CD8-positive, alpha-beta T cell (primary cell): ENCODE measurements at regions of chr17 and their contacts with region 1.

Region 1: DNA sequence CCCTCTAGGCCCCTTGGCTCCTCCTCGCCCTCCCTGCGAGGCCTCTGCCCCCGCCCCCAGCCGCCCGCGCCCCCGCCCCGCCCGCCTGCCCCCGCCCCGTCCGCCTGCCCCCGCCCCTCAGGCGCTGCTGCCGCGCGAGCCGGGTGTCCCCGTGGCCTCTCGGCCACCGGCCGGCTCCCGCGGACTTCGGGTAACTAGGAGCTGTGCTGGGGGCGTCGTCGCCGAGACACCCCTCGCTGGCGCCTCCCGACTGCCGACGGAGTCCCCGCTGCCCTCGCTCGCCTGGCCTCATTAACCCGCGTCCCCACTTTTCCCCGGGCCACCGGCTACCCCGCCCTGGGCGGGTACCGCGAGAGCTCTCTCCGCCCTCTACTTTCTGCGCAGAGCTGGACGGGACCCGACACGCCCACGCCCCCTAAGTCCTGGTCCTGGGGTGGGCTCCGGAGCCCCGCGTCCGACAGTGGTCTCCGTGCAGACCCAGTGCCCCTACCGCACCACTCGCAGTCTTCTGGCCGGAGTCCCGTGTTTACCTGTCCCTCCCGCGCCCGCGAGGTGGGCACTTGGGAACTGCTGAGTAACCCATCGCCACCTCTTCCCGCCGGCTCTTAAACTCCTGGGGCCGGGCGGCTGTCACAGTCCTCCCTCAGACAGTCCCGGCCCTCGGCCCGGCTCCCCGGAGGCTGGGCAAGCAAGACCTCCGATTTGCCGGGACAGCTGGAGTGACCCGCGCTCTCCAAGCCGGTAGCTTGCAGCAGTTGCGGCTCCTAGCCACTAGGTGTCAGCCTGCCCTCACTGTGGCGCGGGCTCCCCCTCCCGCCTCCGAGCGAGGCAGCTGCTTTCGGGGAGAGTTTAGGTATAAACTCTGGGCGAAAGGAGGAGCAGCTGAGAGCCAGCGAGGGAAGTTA is at the start of gene TLCD1:
- DNase-seq: peak; percentile 82 to 94 (median 91)
- ATAC-seq: peak; percentile 43
- H3K4me3 ChIP-seq: peak within 1 kb of the TSS; percentile 88 to 92
- H3K4me3 Mint-ChIP-seq: peak within 1 kb of the TSS; percentile 97
- H3K27ac ChIP-seq: peak within 1 kb of the TSS; percentile 43 to 98
- H3K27ac Mint-ChIP-seq: peak within 1 kb of the TSS; percentile 99
- H3K4me1 ChIP-seq: peaks cover 38% of the 10 kb centered on the region
- H3K4me1 Mint-ChIP-seq: peaks cover 59% of the 10 kb centered on the region
- H3K27me3 ChIP-seq: no peaks in the 10 kb centered on the region
- H3K27me3 Mint-ChIP-seq: no peaks in the 10 kb centered on the region
- CTCF ChIP-seq: peak; percentile 99
- total RNA-seq, gene TLCD1: 0.73 to 1.1 TPM

Region 2: DNA sequence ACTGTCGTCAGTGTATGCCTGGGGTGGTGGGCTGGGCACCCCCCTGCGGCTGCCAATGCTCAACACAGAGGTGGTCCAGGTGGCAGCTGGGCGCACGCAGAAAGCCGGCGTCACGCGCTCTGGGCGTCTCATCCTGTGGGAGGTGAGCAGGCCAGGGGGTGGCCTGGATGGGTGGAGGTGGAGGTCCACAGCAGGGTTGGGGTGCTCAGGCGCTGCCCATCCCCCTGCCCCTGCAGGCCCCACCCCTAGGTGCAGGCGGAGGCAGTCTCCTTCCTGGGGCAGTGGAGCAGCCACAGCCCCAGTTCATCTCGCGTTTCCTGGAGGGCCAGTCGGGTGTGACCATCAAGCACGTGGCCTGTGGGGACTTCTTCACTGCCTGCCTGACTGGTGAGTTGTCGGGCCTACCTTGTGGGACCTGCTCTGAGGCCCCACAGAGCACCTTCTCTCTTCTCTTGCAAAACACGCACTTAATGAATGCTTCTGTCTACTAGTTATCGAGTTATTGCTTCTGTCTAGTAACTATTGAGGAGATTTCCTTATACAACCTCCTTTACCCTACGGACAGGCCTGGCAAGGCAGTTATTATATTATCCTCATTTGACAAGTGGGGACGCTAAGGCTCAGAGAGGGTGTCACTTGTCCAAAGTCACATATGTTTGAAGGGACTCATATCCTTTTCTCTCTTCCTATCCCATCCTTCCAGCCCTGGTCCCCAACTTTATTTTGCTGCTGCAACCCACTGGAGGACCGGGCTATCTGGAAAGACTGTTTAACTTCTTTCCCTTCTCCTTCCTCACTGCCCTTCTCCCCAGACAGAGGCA is 11.6 kb after region 1 on chr17:
- CTCF ChIA-PET with region 1: interaction called, 532 read pairs
- POLR2A ChIA-PET with region 1: interaction called, 187 read pairs
- intact Hi-C with region 1: loop called (anchors 1 kb)
- DNase-seq: peak in 1 of 9 experiments; percentile 38
- ATAC-seq: no peak
- H3K4me3 ChIP-seq: no peak overlapping the region
- H3K4me3 Mint-ChIP-seq: no peak overlapping the region
- H3K27ac ChIP-seq: no peak overlapping the region
- H3K27ac Mint-ChIP-seq: peak overlapping the region; percentile 86
- H3K4me1 ChIP-seq: peaks cover 24% of the 10 kb centered on the region
- H3K4me1 Mint-ChIP-seq: peaks cover 17% of the 10 kb centered on the region
- H3K27me3 ChIP-seq: no peaks in the 10 kb centered on the region
- H3K27me3 Mint-ChIP-seq: no peaks in the 10 kb centered on the region
- CTCF ChIP-seq: no peak

Region 3: DNA sequence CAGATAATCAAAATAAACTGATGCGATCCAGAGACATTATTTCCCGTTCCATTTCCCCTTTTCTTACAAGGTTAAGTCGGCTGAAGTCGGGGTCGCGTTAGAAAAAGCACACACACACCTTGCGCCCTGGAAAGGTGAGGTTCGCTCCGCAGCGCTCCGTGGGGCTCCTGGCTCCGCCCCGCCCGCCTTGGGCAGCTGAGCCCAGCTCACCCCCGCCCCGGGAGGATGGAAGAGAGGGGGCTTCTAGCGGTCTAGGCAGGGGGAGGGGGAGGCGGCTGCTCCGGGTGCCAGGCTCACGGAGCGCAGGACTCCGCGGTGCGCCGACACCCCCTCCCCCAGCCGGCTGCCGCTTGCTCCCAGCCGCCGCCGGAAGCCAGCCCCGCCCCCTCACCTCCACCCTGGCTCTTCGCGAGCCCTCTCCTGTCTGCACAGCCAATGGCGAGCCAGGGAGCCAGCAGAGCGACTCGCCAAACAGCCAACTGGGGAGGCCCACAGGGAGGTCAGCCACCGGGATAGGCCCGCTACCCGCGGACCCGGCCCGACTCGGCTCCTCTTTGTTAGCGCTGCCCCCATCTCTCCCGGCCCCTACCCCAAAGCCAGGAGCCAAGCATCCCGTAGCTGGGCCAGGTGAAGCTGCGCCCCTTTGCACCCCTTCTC is 85.7 kb after region 1 on chr17:
- CTCF ChIA-PET with region 1: interaction called, 4 read pairs
- POLR2A ChIA-PET with region 1: interaction called, 3 read pairs
- intact Hi-C with region 1: loop called (anchors 2 to 5 kb)
- DNase-seq: peak; percentile 90 to 98 (median 96)
- ATAC-seq: peak; percentile 96
- H3K4me3 ChIP-seq: peak overlapping the region; percentile 67 to 99
- H3K4me3 Mint-ChIP-seq: peak overlapping the region; percentile 94
- H3K27ac ChIP-seq: peak overlapping the region; percentile 93 to 96
- H3K27ac Mint-ChIP-seq: peak overlapping the region; percentile 93
- H3K4me1 ChIP-seq: peaks cover 18% of the 10 kb centered on the region
- H3K4me1 Mint-ChIP-seq: peaks cover 35% of the 10 kb centered on the region
- H3K27me3 ChIP-seq: no peaks in the 10 kb centered on the region
- H3K27me3 Mint-ChIP-seq: no peaks in the 10 kb centered on the region
- CTCF ChIP-seq: no peak

Region 4: GRCh38 chr17:28864991-28865849 is 138.7 kb after region 1 on chr17:
- CTCF ChIA-PET with region 1: no interaction called
- POLR2A ChIA-PET with region 1: no interaction called
- intact Hi-C with region 1: no loop called
- DNase-seq: no peak
- ATAC-seq: no peak
- H3K4me3 ChIP-seq: no peak overlapping the region
- H3K4me3 Mint-ChIP-seq: no peak overlapping the region
- H3K27ac ChIP-seq: no peak overlapping the region
- H3K27ac Mint-ChIP-seq: no peak overlapping the region
- H3K4me1 ChIP-seq: no peaks in the 10 kb centered on the region
- H3K4me1 Mint-ChIP-seq: no peaks in the 10 kb centered on the region
- H3K27me3 ChIP-seq: no peaks in the 10 kb centered on the region
- H3K27me3 Mint-ChIP-seq: no peaks in the 10 kb centered on the region
- CTCF ChIP-seq: no peak

Region 5: DNA sequence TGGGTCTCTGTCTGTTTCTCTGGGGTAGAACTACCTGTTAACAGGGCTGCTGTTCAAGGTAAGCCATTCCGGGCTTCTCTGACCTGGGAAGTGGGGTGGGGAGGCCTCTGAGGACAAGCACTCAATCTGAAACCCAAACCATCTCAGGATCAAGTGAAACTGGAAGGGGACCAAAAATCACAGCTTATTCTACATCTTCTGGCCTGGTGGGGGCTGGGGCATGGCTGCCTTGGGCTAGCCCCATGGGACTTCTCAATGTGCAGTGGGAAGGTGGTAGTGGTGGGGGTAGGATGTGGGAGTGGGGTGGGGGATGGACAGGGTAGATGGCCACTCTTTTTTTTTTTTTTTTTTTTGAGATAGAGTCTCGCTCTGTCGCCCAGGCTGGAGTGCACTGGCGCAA is 165.5 kb after region 1 on chr17:
- CTCF ChIA-PET with region 1: interaction called, 18 read pairs
- POLR2A ChIA-PET with region 1: interaction called, 6 read pairs
- intact Hi-C with region 1: no loop called
- DNase-seq: no peak
- ATAC-seq: no peak
- H3K4me3 ChIP-seq: no peak overlapping the region
- H3K4me3 Mint-ChIP-seq: peak overlapping the region; percentile 54
- H3K27ac ChIP-seq: peak overlapping the region in 1 of 2 experiments; percentile 38
- H3K27ac Mint-ChIP-seq: peak overlapping the region; percentile 85
- H3K4me1 ChIP-seq: peaks cover 43% of the 10 kb centered on the region
- H3K4me1 Mint-ChIP-seq: peaks cover 60% of the 10 kb centered on the region
- H3K27me3 ChIP-seq: no peaks in the 10 kb centered on the region
- H3K27me3 Mint-ChIP-seq: no peaks in the 10 kb centered on the region
- CTCF ChIP-seq: no peak

Region 6: DNA sequence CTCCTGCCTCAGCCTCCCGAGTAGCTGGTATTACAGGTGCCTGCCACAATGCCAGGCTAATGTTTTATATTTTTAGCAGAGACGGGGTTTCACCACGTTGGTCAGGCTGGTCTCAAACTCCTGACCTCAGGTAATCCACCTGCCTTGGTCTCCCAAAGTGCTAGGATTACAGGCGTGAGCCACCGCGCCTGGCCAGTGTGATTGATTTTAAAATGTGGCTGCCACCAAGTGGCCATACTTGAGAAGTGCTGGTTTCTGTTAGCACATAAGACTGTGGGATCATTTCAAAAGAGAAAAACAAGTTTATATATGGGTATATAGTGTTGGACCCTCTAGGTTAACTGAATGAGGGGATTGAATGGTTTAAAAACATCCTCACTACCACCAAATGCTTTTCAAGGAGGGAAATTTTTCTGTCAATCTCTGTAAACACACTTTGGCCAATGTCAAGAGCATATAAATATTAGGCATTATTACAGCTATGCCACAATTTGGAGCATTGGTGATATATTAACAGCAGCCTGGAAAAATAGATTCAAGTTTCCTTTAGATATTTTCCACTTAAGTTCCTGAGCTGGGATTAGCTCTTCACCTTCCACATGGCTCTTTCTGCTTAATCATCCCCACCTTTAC is 189.9 kb after region 1 on chr17:
- CTCF ChIA-PET with region 1: interaction called, 26 read pairs
- POLR2A ChIA-PET with region 1: no interaction called
- intact Hi-C with region 1: loop called in 1 of 2 experiments (anchors 1 kb)
- DNase-seq: peak in 6 of 9 experiments; percentile 44 to 67 (median 54)
- ATAC-seq: peak; percentile 75
- H3K4me3 ChIP-seq: no peak overlapping the region
- H3K4me3 Mint-ChIP-seq: no peak overlapping the region
- H3K27ac ChIP-seq: no peak overlapping the region
- H3K27ac Mint-ChIP-seq: peak overlapping the region; percentile 65
- H3K4me1 ChIP-seq: no peaks in the 10 kb centered on the region
- H3K4me1 Mint-ChIP-seq: peaks cover 1% of the 10 kb centered on the region
- H3K27me3 ChIP-seq: no peaks in the 10 kb centered on the region
- H3K27me3 Mint-ChIP-seq: no peaks in the 10 kb centered on the region
- CTCF ChIP-seq: peak; percentile 74

Region 7: DNA sequence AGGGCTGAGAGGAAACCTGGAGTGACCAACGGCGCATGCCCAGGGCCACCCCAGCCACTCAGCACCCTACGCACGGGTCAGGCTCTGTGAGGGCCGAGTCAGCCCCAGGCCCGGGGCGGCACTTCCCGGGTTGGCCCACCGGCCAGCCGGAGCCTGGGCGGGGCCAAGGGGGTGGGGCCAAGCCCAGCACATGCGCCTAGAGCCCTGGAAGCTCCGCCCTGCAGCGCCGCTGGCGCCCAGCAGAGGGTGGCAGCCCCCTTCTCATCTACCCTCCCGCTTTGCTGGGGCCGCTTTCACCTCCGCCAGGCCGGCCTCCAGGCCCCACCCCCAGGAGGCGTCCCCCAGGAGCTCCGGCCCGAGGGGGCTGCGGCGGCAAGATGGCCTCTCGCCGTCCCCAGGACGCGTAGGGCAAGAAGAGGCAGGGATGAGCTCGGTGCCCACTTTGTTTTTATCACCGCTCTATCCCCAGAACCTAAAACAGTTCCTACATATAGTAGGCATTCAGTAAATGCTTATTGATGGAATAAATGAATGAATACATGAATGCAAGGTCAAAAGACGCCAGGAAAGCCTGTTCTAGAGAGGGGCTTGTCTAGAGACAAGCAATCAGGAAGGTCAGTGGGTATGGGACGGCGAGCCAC is 422.4 kb after region 1 on chr17:
- CTCF ChIA-PET with region 1: no interaction called
- POLR2A ChIA-PET with region 1: no interaction called
- intact Hi-C with region 1: loop called in 1 of 2 experiments (anchors 10 kb)
- DNase-seq: peak; percentile 82 to 95 (median 91)
- ATAC-seq: peak; percentile 97
- H3K4me3 ChIP-seq: peak overlapping the region; percentile 54 to 56
- H3K4me3 Mint-ChIP-seq: peak overlapping the region; percentile 76
- H3K27ac ChIP-seq: peak overlapping the region in 1 of 2 experiments; percentile 88
- H3K27ac Mint-ChIP-seq: peak overlapping the region; percentile 87
- H3K4me1 ChIP-seq: peaks cover 23% of the 10 kb centered on the region
- H3K4me1 Mint-ChIP-seq: peaks cover 33% of the 10 kb centered on the region
- H3K27me3 ChIP-seq: no peaks in the 10 kb centered on the region
- H3K27me3 Mint-ChIP-seq: no peaks in the 10 kb centered on the region
- CTCF ChIP-seq: peak; percentile 98